Colonic mucosa (tissue), 4 donors: ENCODE measurements at regions of chr13 and their contacts with region 1.

Region 1: GRCh38 chr13:20945952-20946383 is 43.4 kb upstream of the XPO4 start:
- DNase-seq: peak; percentile 18
- H3K4me3 ChIP-seq: no peak overlapping the region
- H3K27ac ChIP-seq: no peak overlapping the region
- H3K4me1 ChIP-seq: no peaks in the 10 kb centered on the region
- H3K27me3 ChIP-seq: no peaks in the 10 kb centered on the region
- CTCF ChIP-seq: no peak

Region 2: GRCh38 chr13:21137696-21138095 is 191.7 kb after region 1 on chr13:
- intact Hi-C with region 1: loop called (anchors 10 kb)
- DNase-seq: no peak
- H3K4me3 ChIP-seq: no peak overlapping the region
- H3K27ac ChIP-seq: no peak overlapping the region
- H3K4me1 ChIP-seq: peaks cover 8% of the 10 kb centered on the region
- H3K27me3 ChIP-seq: no peaks in the 10 kb centered on the region
- CTCF ChIP-seq: no peak

Region 3: DNA sequence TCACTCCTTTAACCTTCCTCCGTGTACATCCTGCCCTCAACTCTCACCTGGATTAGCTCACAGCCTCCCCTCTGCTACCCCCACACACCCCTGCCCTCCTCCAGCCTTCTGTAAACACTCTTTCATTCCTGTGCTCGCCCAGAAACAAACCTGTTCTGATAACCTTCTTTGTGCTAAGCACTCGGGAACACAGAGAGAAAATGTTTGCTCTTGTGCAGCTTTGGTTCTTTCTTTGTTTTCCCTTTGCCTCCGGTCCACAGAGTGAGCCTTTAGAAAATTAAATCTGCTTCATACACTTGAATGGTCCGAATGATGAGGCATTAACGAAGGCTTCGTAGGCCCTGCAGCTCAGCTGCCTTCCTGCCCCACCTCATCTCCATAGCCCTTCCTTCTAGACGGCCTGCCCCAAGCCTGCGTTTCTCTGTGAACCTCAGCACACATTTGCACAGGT is 519.8 kb after region 1 on chr13:
- intact Hi-C with region 1: loop called (anchors 10 kb)
- DNase-seq: peak; percentile 25
- H3K4me3 ChIP-seq: no peak overlapping the region
- H3K27ac ChIP-seq: no peak overlapping the region
- H3K4me1 ChIP-seq: no peaks in the 10 kb centered on the region
- H3K27me3 ChIP-seq: no peaks in the 10 kb centered on the region
- CTCF ChIP-seq: no peak